Psoas muscle (tissue), 8 donors: ENCODE measurements at regions of chr1 and their contacts with region 1.

Region 1: GRCh38 chr1:109643385-109644230 is 12.3 kb upstream of the GSTM4 start:
- DNase-seq: peak; percentile 85 to 93
- ATAC-seq: peak; percentile 93 to 97 (median 94)
- H3K4me3 ChIP-seq: peak overlapping the region; percentile 26
- H3K27ac ChIP-seq: no peak overlapping the region
- H3K4me1 ChIP-seq: no peaks in the 10 kb centered on the region
- H3K27me3 ChIP-seq: no peaks in the 10 kb centered on the region
- CTCF ChIP-seq: peak; percentile 93

Region 2: GRCh38 chr1:109610609-109611307 is 32.9 kb before region 1 on chr1:
- intact Hi-C with region 1: no loop called
- DNase-seq: no peak
- ATAC-seq: no peak
- H3K4me3 ChIP-seq: no peak overlapping the region
- H3K27ac ChIP-seq: no peak overlapping the region
- H3K4me1 ChIP-seq: no peaks in the 10 kb centered on the region
- H3K27me3 ChIP-seq: no peaks in the 10 kb centered on the region
- CTCF ChIP-seq: no peak

Region 3: GRCh38 chr1:109677459-109677858 is 33.9 kb after region 1 on chr1:
- intact Hi-C with region 1: no loop called
- DNase-seq: no peak
- ATAC-seq: peak in 1 of 4 donors; percentile 6
- H3K4me3 ChIP-seq: peak overlapping the region; percentile 11
- H3K27ac ChIP-seq: peak overlapping the region; percentile 89
- H3K4me1 ChIP-seq: peaks cover 18% of the 10 kb centered on the region
- H3K27me3 ChIP-seq: no peaks in the 10 kb centered on the region
- CTCF ChIP-seq: no peak

Region 4: DNA sequence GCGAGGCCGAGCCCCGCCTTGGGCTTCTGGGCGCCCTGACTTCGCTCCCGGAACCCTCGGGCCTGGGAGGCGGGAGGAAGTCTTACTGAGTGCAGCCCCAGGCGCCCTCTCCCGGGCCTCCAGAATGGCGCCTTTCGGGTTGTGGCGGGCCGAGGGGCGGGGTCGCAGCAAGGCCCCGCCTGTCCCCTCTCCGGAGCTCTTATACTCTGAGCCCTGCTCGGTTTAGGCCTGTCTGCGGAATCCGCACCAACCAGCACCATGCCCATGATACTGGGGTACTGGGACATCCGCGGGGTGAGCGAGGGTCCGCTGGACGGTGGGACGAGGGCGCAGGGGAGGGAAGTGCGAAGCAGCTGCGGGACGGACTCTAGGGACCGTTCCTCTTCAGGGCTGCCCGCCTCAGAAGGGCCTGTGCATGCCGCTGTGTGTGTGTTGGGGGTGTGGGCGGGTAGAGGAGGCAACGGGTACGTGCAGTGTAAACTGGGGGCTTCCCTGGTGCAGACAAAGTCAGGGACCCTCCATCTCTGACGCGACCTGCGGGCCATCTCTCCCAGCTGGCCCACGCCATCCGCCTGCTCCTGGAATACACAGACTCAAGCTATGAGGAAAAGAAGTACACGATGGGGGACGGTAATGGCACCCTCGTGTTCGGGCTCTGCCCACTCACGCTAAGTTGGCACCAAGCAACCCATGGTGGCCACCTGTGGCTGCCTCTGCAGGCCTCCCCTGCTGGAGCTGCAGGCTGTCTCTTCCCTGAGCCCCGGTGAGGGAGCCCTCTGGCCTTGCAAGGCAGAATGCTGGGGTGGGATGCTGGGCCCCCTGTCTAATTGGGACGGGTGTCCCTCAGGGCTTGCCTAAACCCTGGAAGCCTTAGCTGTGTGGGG is 44.2 kb after region 1 on chr1 and contains the start of gene GSTM1:
- intact Hi-C with region 1: loop called (anchors 1 to 5 kb)
- DNase-seq: peak in 1 of 2 donors; percentile 90
- ATAC-seq: peak in 2 of 4 donors; percentile 95 to 96
- H3K4me3 ChIP-seq: peak within 1 kb of the TSS; percentile 67
- H3K27ac ChIP-seq: peak within 1 kb of the TSS; percentile 91
- H3K4me1 ChIP-seq: peaks cover 29% of the 10 kb centered on the region
- H3K27me3 ChIP-seq: no peaks in the 10 kb centered on the region
- CTCF ChIP-seq: peak; percentile 61
- total RNA-seq, gene GSTM1: 0.42 to 89.4 (median 27.6) TPM in 3 of 4 donors, not detected in the other

Region 5: DNA sequence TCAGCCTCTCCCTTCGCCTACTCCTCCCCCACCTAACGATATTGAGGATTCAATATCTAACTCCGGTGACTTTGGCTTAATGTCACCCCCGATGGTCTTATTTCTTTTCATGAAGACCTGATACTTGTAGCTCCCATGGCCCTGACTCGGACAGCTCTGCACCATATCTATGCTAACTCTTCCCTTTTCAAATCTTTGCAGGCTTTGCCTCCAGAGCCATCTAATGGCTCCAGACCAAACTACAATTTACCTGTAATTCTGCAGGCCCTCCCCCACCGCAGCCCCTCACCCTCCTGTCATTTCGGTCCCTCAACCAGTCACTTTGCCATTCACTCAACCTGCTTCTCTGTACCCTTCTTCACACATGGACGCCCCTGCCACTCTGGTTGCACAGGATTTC is 60.6 kb after region 1 on chr1:
- intact Hi-C with region 1: loop called in 1 of 2 experiments (anchors 5 kb)
- DNase-seq: no peak
- ATAC-seq: peak in 1 of 4 donors; percentile 58
- H3K4me3 ChIP-seq: no peak overlapping the region
- H3K27ac ChIP-seq: no peak overlapping the region
- H3K4me1 ChIP-seq: no peaks in the 10 kb centered on the region
- H3K27me3 ChIP-seq: no peaks in the 10 kb centered on the region
- CTCF ChIP-seq: no peak